Caco-2 (cell line): ENCODE measurements at regions of chr17 and their contacts with region 1.

Region 1: GRCh38 chr17:48878918-48879898 is 13.4 kb upstream of the ATP5MC1 start:
- DNase-seq: peak; percentile 86 to 90
- H3K4me3 ChIP-seq: no peak overlapping the region
- H3K4me3 Mint-ChIP-seq: no peak overlapping the region
- H3K27ac Mint-ChIP-seq: no peak overlapping the region
- H3K4me1 ChIP-seq: peaks cover 11% of the 10 kb centered on the region
- H3K4me1 Mint-ChIP-seq: peaks cover 12% of the 10 kb centered on the region
- H3K27me3 ChIP-seq: no peaks in the 10 kb centered on the region
- H3K27me3 Mint-ChIP-seq: no peaks in the 10 kb centered on the region
- CTCF ChIP-seq: peak; percentile 100

Region 2: GRCh38 chr17:48671697-48672171 is 207.5 kb before region 1 on chr17:
- CTCF ChIA-PET with region 1: interaction called, 77 read pairs
- POLR2A ChIA-PET with region 1: interaction called, 4 read pairs
- intact Hi-C with region 1: loop called (anchors 1 kb)
- DNase-seq: peak; percentile 86 to 94
- H3K4me3 ChIP-seq: peak overlapping the region; percentile 23
- H3K4me3 Mint-ChIP-seq: peak overlapping the region; percentile 58
- H3K27ac Mint-ChIP-seq: peak overlapping the region; percentile 11
- H3K4me1 ChIP-seq: no peaks in the 10 kb centered on the region
- H3K4me1 Mint-ChIP-seq: peaks cover 5% of the 10 kb centered on the region
- H3K27me3 ChIP-seq: no peaks in the 10 kb centered on the region
- H3K27me3 Mint-ChIP-seq: peaks cover 2% of the 10 kb centered on the region
- CTCF ChIP-seq: peak; percentile 99

Region 3: DNA sequence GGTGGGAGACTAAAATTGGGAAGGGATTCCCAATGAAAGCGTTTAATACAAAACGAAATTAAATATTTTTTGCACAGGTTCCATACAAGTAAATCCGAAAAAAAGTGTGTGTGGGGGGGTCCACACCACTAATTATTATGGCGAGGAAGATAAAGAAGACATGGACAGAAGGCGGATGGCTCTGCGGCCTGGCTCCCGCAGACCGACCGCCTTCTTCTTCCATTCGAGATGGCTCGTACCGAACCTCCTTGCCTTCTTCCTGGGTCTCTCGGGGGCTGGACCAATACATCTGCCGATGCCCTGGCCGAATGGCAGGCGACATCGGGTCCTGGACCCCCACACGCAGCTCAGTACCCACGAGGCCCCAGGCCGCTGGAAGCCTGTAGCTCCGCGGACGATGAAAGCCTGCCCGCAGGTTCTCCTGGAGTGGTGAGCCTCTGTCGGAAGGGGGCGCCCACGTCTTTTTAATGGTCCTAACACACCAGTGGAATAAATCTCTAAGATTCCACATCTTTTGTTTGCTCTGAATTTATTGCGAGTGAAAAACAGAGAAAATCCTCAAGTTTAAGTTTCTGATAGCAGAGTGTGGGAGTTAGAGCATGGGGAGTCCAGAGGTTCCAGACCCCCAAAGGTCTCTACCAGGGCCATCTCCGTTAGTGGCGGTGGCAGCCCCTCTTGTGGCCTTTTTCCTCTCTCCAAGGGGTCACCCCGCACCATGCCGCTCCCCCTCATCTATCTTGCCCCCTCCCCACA is 154.8 kb before region 1 on chr17:
- CTCF ChIA-PET with region 1: interaction called, 92 read pairs
- POLR2A ChIA-PET with region 1: interaction called, 6 read pairs
- intact Hi-C with region 1: loop called (anchors 1 kb)
- DNase-seq: peak; percentile 91 to 94
- H3K4me3 ChIP-seq: no peak overlapping the region
- H3K4me3 Mint-ChIP-seq: no peak overlapping the region
- H3K27ac Mint-ChIP-seq: no peak overlapping the region
- H3K4me1 ChIP-seq: peaks cover 26% of the 10 kb centered on the region
- H3K4me1 Mint-ChIP-seq: peaks cover 2% of the 10 kb centered on the region
- H3K27me3 ChIP-seq: no peaks in the 10 kb centered on the region
- H3K27me3 Mint-ChIP-seq: no peaks in the 10 kb centered on the region
- CTCF ChIP-seq: peak; percentile 97 to 98

Region 4: GRCh38 chr17:48804925-48805411 is 74.2 kb before region 1 on chr17:
- CTCF ChIA-PET with region 1: interaction called, 1,184 read pairs
- POLR2A ChIA-PET with region 1: no interaction called
- intact Hi-C with region 1: loop called (anchors 1 kb)
- DNase-seq: peak; percentile 86 to 95
- H3K4me3 ChIP-seq: no peak overlapping the region
- H3K4me3 Mint-ChIP-seq: no peak overlapping the region
- H3K27ac Mint-ChIP-seq: no peak overlapping the region
- H3K4me1 ChIP-seq: peaks cover 15% of the 10 kb centered on the region
- H3K4me1 Mint-ChIP-seq: peaks cover 17% of the 10 kb centered on the region
- H3K27me3 ChIP-seq: no peaks in the 10 kb centered on the region
- H3K27me3 Mint-ChIP-seq: no peaks in the 10 kb centered on the region
- CTCF ChIP-seq: peak; percentile 100

Region 5: GRCh38 chr17:48841395-48841831 is 37.8 kb before region 1 on chr17:
- CTCF ChIA-PET with region 1: interaction called, 10 read pairs
- POLR2A ChIA-PET with region 1: no interaction called
- intact Hi-C with region 1: no loop called
- DNase-seq: no peak
- H3K4me3 ChIP-seq: no peak overlapping the region
- H3K4me3 Mint-ChIP-seq: no peak overlapping the region
- H3K27ac Mint-ChIP-seq: no peak overlapping the region
- H3K4me1 ChIP-seq: peaks cover 20% of the 10 kb centered on the region
- H3K4me1 Mint-ChIP-seq: peaks cover 30% of the 10 kb centered on the region
- H3K27me3 ChIP-seq: no peaks in the 10 kb centered on the region
- H3K27me3 Mint-ChIP-seq: no peaks in the 10 kb centered on the region
- CTCF ChIP-seq: no peak

Region 6: DNA sequence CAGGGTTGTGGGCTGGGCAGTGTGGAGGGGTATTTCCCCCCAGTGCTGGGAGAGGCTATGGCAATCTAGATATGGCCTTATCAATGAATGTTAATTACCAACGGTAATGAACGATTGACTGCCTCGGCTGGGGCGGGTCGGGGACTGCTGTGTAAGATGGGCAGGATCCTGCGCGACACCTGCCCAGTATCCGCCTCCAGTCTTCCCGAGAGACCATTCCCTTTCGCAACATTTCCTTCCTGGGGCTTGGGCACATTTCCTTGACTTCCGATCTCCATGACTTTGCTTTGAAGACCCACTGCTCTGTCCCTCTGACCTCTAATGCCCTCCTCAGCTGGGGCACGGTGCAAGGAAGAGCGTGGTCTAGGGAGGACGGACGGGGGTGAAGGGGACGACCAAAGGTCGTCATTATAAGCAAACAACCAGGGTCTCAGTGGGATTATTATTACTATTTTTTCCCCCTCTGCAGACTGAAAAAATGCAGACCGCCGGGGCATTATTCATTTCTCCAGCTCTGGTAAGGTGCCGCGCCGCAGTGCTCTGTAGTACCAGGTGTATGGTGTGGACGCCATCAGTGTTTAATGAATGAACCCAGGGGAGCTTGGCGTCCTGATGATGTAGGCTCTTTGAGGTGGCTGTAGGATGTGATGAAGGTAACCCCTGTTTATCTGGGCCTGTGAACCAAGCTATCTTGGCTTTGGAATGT is 13.9 kb after region 1 on chr17:
- CTCF ChIA-PET with region 1: interaction called, 61 read pairs
- POLR2A ChIA-PET with region 1: interaction called, 9 read pairs
- intact Hi-C with region 1: no loop called
- DNase-seq: no peak
- H3K4me3 ChIP-seq: peak overlapping the region; percentile 73
- H3K4me3 Mint-ChIP-seq: peak overlapping the region; percentile 84
- H3K27ac Mint-ChIP-seq: peak overlapping the region; percentile 90
- H3K4me1 ChIP-seq: peaks cover 13% of the 10 kb centered on the region
- H3K4me1 Mint-ChIP-seq: peaks cover 12% of the 10 kb centered on the region
- H3K27me3 ChIP-seq: no peaks in the 10 kb centered on the region
- H3K27me3 Mint-ChIP-seq: peaks cover 2% of the 10 kb centered on the region
- CTCF ChIP-seq: no peak